Activated CD4-positive, alpha-beta T cell treated with anti-CD3 and anti-CD28 coated beads, Interleukin-2, amount 10 ng/mL, durations not matched to agents 7 days and 5 days (primary cell): ENCODE measurements at regions of chr14 and their contacts with region 1.

Region 1: DNA sequence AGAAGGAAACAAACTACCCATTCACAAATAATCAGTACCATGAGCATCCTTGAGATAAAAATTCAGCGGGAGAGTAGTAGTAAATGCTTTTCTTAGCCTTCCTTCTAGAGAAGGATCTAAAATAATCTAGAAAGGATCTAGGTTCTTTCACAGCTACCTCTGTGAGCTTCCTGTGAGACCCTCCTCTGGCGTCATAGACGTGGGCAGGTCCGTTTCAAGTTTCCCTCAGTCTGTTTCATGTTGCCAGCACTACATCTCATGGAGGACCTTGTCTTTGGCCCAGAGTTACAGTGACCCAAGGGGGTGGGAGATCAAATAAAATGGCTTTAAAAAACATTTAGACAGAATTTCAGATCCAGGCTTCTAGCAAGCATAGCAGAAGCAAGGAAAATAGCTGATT is 13.6 kb downstream of the DAAM1 start:
- DNase-seq: no peak
- H3K4me3 Mint-ChIP-seq: no peak overlapping the region
- H3K27ac Mint-ChIP-seq: no peak overlapping the region
- H3K4me1 Mint-ChIP-seq: peaks cover 4% of the 10 kb centered on the region
- H3K27me3 Mint-ChIP-seq: no peaks in the 10 kb centered on the region

Region 2: GRCh38 chr14:59189786-59190771 is 12.0 kb before region 1 on chr14:
- CTCF ChIA-PET with region 1: interaction called, 10 read pairs
- POLR2A ChIA-PET with region 1: no interaction called
- DNase-seq: peak; percentile 86
- H3K4me3 Mint-ChIP-seq: peak overlapping the region; percentile 84
- H3K27ac Mint-ChIP-seq: peak overlapping the region; percentile 79
- H3K4me1 Mint-ChIP-seq: peaks cover 28% of the 10 kb centered on the region
- H3K27me3 Mint-ChIP-seq: peaks cover 13% of the 10 kb centered on the region

Region 3: DNA sequence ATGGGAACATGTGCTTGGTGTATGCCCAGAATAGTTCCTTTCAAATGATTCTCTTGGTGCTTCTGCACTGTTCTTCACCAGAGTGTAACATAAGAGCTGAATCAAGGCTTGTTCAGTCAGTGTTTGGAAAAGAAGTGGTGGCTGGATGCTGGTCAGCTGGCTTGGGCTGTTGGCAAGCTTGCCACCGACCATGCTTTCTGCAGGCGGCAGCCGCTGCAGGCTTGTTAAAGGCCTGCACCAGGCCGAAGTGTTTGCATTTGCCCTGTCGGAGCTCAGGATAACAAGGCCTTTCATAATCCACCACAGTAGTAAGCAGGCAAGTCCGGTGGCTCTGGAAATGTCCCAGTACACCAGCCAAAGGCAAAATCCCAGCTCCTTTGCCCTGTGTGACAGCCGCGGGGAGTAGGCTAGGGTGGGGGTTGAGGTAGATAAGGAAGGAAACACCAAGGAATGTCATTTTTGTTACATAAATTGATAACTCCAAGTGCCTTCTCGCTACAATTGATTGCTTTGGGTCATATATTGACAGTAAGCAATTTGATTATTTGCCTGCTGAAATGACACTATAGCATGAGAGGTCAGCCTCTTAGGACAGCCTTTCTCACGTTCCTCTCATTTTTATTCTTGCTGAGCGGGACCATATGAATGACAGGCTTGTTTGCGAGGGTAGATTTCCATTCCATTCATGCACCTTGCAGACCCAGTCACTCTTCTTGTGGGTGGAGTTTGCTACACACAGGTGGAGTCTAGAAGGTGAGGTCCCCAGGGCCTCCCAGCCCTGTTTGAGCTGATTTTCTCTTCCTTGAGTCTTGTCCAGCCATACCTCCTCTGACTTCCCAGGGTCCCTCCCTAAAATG is 13.5 kb after region 1 on chr14:
- CTCF ChIA-PET with region 1: no interaction called
- POLR2A ChIA-PET with region 1: no interaction called
- DNase-seq: no peak
- H3K4me3 Mint-ChIP-seq: no peak overlapping the region
- H3K27ac Mint-ChIP-seq: no peak overlapping the region
- H3K4me1 Mint-ChIP-seq: no peaks in the 10 kb centered on the region
- H3K27me3 Mint-ChIP-seq: no peaks in the 10 kb centered on the region

Region 4: GRCh38 chr14:59228421-59228820 is 26.4 kb after region 1 on chr14:
- CTCF ChIA-PET with region 1: no interaction called
- POLR2A ChIA-PET with region 1: no interaction called
- DNase-seq: no peak
- H3K4me3 Mint-ChIP-seq: no peak overlapping the region
- H3K27ac Mint-ChIP-seq: no peak overlapping the region
- H3K4me1 Mint-ChIP-seq: peaks cover 20% of the 10 kb centered on the region
- H3K27me3 Mint-ChIP-seq: no peaks in the 10 kb centered on the region

Region 5: DNA sequence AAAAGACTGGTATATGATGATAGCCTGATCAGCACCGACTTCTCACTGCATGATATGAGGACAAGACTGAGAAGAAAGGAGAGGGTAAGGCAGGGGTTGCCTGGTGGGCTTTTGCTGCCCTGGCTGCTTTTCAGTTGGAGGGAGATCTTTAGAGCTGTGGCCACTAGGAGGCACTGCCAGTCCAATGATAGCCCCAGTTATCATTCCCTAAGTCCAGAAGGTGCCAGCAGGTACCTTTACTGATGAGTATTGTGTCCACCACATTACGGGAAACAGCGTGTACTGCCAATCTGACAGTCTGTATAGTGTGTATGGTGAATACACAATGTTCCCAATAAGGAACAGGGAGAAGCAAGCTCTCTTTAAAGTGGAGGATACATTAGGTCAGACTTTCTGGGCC is 430.4 kb after region 1 on chr14:
- CTCF ChIA-PET with region 1: no interaction called
- POLR2A ChIA-PET with region 1: no interaction called
- DNase-seq: no peak
- H3K4me3 Mint-ChIP-seq: no peak overlapping the region
- H3K27ac Mint-ChIP-seq: no peak overlapping the region
- H3K4me1 Mint-ChIP-seq: peaks cover 6% of the 10 kb centered on the region
- H3K27me3 Mint-ChIP-seq: peaks cover 46% of the 10 kb centered on the region